Gastrocnemius medialis (tissue), 4 donors: ENCODE measurements at regions of chr1 and their contacts with region 1.

Region 1: DNA sequence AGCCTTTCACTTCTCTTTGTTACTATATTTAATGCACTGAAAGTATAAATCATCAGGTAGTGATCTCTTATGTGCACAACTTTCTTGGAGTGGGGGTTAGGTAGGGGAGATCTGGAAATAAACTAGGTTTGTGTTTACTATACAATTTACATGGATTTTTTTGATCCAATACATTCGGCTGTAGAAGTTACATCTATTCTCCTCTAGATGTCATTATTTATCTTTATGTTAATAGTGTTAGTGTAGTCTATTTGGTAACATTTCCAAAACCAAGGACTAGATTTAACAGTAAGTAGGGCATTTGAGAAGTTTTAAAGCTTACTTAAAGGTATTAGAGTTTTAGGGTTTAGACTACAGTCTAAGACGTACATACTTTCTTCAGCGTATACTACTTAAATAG is 5.4 kb downstream of the VPS45 start:
- DNase-seq: no peak
- ATAC-seq: peak in 1 of 2 donors; percentile 71
- H3K4me3 ChIP-seq: no peak overlapping the region
- H3K27ac ChIP-seq: no peak overlapping the region
- H3K4me1 ChIP-seq: peaks cover 4 to 9% of the 10 kb centered on the region in 2 donors
- H3K27me3 ChIP-seq: no peaks in the 10 kb centered on the region
- CTCF ChIP-seq: peak; percentile 15 to 50 (median 26)
- POLR2A ChIP-seq: no peak

Region 2: DNA sequence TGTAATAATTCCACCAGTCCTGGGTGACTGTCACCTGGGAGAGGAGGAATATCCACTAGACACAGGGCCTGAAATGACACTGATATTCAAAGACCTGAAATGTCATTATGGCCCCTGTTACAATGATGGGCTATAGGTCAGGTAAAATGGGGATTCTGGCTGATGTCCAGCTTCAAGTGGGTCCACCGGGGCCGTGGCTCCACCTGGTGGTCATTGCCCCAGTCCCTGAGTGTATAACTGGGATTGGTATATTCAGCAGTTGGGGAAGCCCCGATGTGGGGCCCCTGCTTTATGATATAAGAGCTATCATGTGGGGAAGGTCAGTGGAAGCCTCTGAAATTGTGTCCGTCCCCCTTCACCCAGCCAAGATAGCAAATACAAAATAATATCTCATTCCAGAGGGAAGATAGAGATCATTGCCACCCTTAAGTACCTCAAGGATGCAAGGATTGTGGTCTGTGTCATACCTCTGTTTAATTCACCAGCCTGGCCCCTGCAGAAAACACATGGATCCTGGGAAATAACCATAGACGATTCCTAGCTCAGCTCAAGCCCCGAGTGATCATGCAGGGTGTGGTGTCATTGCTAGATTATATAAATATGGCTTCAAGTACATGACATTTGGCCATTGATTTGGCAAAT is 96.1 kb after region 1 on chr1:
- in situ Hi-C with region 1: loop called (anchors 5 to 10 kb)
- intact Hi-C with region 1: loop called (anchors 1 kb)
- DNase-seq: peak; percentile 36 to 61
- ATAC-seq: peak; percentile 60 to 62
- H3K4me3 ChIP-seq: no peak overlapping the region
- H3K27ac ChIP-seq: no peak overlapping the region
- H3K4me1 ChIP-seq: peaks cover 0 to under 1% of the 10 kb centered on the region in 2 donors
- H3K27me3 ChIP-seq: no peaks in the 10 kb centered on the region
- CTCF ChIP-seq: peak; percentile 73 to 86 (median 84)
- POLR2A ChIP-seq: no peak

Region 3: DNA sequence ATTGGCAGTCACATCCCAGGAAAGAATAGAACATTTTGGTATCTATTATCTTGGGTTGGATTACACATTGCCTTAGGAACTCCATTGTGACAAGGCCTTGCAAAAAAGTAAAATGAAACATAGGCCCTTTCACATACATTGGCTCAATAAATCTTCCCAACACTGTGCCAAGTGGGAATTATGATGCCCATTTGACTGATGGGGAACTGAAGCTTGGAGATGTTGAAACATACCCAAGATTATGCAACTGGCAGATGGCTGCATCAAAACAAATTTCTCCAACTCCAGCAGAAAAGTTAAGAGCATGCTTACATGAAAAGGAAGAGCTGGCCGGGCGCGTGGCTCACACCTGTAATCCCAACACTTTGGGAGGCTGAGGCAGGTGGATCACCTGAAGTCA is 103.6 kb after region 1 on chr1:
- in situ Hi-C with region 1: loop called in 1 of 4 experiments (anchors 10 kb)
- intact Hi-C with region 1: no loop called
- DNase-seq: no peak
- ATAC-seq: no peak
- H3K4me3 ChIP-seq: no peak overlapping the region
- H3K27ac ChIP-seq: no peak overlapping the region
- H3K4me1 ChIP-seq: no peaks in the 10 kb centered on the region
- H3K27me3 ChIP-seq: no peaks in the 10 kb centered on the region
- CTCF ChIP-seq: no peak
- POLR2A ChIP-seq: no peak